CD8-positive, alpha-beta T cell (primary cell): ENCODE measurements at regions of chr1 and their contacts with region 1.

Region 1: DNA sequence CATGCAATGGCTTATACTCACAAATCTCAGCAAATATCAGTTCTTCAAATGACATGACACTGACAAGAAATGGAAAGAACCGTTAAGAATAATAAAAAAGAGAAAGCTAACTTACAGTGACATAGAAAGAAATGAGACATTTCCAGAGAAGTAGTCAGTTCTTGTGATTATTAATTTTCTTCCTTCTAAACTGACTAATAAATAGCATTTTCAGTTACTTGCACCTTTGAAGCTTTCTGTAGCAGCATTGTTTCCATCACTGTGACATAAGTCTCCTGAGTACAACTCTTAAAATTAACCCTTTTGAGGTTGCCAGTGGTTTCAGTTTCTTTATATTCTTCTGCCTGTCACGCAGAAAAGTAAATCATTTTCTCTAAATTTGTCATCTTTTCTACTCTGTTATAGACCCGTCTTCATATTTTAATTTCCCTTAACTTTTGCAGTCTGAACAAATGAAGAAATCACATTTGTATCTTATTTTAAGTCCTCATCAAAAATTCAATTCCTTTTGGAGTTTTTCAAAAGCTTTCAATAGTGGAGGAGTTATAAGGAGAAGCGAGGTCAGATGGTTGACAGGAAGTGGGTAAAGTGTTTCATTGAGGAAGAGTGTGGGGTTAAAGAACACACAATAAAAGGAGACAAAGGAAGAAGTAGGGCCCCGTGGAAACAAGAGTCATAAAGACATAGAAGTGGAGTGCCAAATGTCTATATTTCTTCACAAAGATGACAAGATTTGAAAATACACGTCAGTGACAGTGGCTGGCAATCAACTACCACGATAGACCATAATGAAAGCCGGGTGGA is 57.9 kb upstream of the S1PR1 start:
- DNase-seq: peak in 2 of 9 experiments; percentile 33 to 57
- ATAC-seq: peak; percentile 71
- H3K4me3 ChIP-seq: no peak overlapping the region
- H3K4me3 Mint-ChIP-seq: peak overlapping the region; percentile 74
- H3K27ac ChIP-seq: peak overlapping the region; percentile 6 to 48
- H3K27ac Mint-ChIP-seq: peak overlapping the region; percentile 94
- H3K4me1 ChIP-seq: peaks cover 21% of the 10 kb centered on the region
- H3K4me1 Mint-ChIP-seq: peaks cover 26% of the 10 kb centered on the region
- H3K27me3 ChIP-seq: no peaks in the 10 kb centered on the region
- H3K27me3 Mint-ChIP-seq: no peaks in the 10 kb centered on the region
- CTCF ChIP-seq: no peak

Region 2: GRCh38 chr1:101144671-101145448 is 34.0 kb before region 1 on chr1:
- CTCF ChIA-PET with region 1: no interaction called
- POLR2A ChIA-PET with region 1: no interaction called
- intact Hi-C with region 1: loop called in 1 of 2 experiments (anchors 5 kb)
- DNase-seq: no peak
- ATAC-seq: no peak
- H3K4me3 ChIP-seq: no peak overlapping the region
- H3K4me3 Mint-ChIP-seq: no peak overlapping the region
- H3K27ac ChIP-seq: no peak overlapping the region
- H3K27ac Mint-ChIP-seq: no peak overlapping the region
- H3K4me1 ChIP-seq: no peaks in the 10 kb centered on the region
- H3K4me1 Mint-ChIP-seq: peaks cover 3% of the 10 kb centered on the region
- H3K27me3 ChIP-seq: no peaks in the 10 kb centered on the region
- H3K27me3 Mint-ChIP-seq: no peaks in the 10 kb centered on the region
- CTCF ChIP-seq: no peak

Region 3: DNA sequence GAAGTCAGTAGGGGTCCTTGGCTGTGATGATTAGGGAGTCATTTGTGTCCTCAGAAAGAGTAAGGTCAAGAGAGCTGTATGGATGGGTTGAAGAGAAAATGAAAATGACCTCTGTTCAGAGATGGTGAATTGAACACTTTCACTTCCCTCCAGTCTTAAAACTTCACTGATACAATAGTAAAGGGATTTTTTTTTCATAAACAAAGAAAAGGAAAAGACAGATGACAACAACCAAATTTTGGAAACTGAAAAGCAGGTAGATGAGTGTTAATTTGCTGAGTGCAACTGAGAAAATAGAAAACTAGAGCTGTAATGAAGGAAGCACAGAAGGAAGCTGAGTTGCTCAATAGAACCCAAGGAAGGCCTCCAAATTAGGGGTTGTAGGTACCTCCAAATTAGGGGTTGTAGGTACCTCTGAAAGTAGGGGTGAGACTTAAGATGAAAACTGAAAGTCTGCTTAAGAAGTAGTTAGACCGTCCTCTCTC is 43.1 kb after region 1 on chr1:
- CTCF ChIA-PET with region 1: no interaction called
- POLR2A ChIA-PET with region 1: no interaction called
- intact Hi-C with region 1: loop called in 1 of 2 experiments (anchors 5 kb)
- DNase-seq: no peak
- ATAC-seq: no peak
- H3K4me3 ChIP-seq: no peak overlapping the region
- H3K4me3 Mint-ChIP-seq: no peak overlapping the region
- H3K27ac ChIP-seq: no peak overlapping the region
- H3K27ac Mint-ChIP-seq: no peak overlapping the region
- H3K4me1 ChIP-seq: no peaks in the 10 kb centered on the region
- H3K4me1 Mint-ChIP-seq: peaks cover 8% of the 10 kb centered on the region
- H3K27me3 ChIP-seq: no peaks in the 10 kb centered on the region
- H3K27me3 Mint-ChIP-seq: no peaks in the 10 kb centered on the region
- CTCF ChIP-seq: no peak

Region 4: GRCh38 chr1:101618900-101619299 is 440.0 kb after region 1 on chr1:
- CTCF ChIA-PET with region 1: no interaction called
- POLR2A ChIA-PET with region 1: no interaction called
- intact Hi-C with region 1: no loop called
- DNase-seq: no peak
- ATAC-seq: no peak
- H3K4me3 ChIP-seq: no peak overlapping the region
- H3K4me3 Mint-ChIP-seq: no peak overlapping the region
- H3K27ac ChIP-seq: no peak overlapping the region
- H3K27ac Mint-ChIP-seq: no peak overlapping the region
- H3K4me1 ChIP-seq: no peaks in the 10 kb centered on the region
- H3K4me1 Mint-ChIP-seq: no peaks in the 10 kb centered on the region
- H3K27me3 ChIP-seq: no peaks in the 10 kb centered on the region
- H3K27me3 Mint-ChIP-seq: peaks cover 11% of the 10 kb centered on the region
- CTCF ChIP-seq: no peak